GM12878 (cell line): ENCODE measurements at regions of chr1 and their contacts with region 1.

Region 1: GRCh38 chr1:107979926-107980325 is 14.9 kb upstream of the VAV3 start:
- DNase-seq: no peak
- ATAC-seq: peak; percentile 40
- H3K4me3 ChIP-seq: no peak overlapping the region
- H3K27ac ChIP-seq: no peak overlapping the region
- H3K4me1 ChIP-seq: no peaks in the 10 kb centered on the region
- H3K27me3 ChIP-seq: no peaks in the 10 kb centered on the region; a peak in 1 of 4 replicates
- CTCF ChIP-seq: no peak
- EP300 ChIP-seq: no peak
- POLR2A ChIP-seq: no peak
- RAD21 ChIP-seq: no peak

Region 2: GRCh38 chr1:107914134-107914765 is 65.7 kb before region 1 on chr1:
- CTCF ChIA-PET with region 1: no interaction called
- POLR2A ChIA-PET with region 1: no interaction called
- RAD21 ChIA-PET with region 1: no interaction called
- SMC1A ChIA-PET with region 1: no interaction called
- in situ Hi-C with region 1: no loop called
- intact Hi-C with region 1: no loop called
- DNase-seq: no peak
- ATAC-seq: no peak
- H3K4me3 ChIP-seq: no peak overlapping the region
- H3K27ac ChIP-seq: no peak overlapping the region
- H3K4me1 ChIP-seq: no peaks in the 10 kb centered on the region
- H3K27me3 ChIP-seq: no peaks in the 10 kb centered on the region; a peak in 1 of 4 replicates
- CTCF ChIP-seq: no peak
- EP300 ChIP-seq: no peak
- POLR2A ChIP-seq: no peak
- RAD21 ChIP-seq: no peak

Region 3: GRCh38 chr1:108000620-108001111 is 20.7 kb after region 1 on chr1:
- CTCF ChIA-PET with region 1: interaction called, 4 read pairs
- POLR2A ChIA-PET with region 1: interaction called, 5 read pairs
- RAD21 ChIA-PET with region 1: no interaction called
- SMC1A ChIA-PET with region 1: no interaction called
- in situ Hi-C with region 1: no loop called
- intact Hi-C with region 1: loop called (anchors 2 kb)
- DNase-seq: no peak
- ATAC-seq: no peak
- H3K4me3 ChIP-seq: no peak overlapping the region
- H3K27ac ChIP-seq: no peak overlapping the region
- H3K4me1 ChIP-seq: no peaks in the 10 kb centered on the region
- H3K27me3 ChIP-seq: no peaks in the 10 kb centered on the region
- CTCF ChIP-seq: no peak
- EP300 ChIP-seq: no peak
- POLR2A ChIP-seq: no peak
- RAD21 ChIP-seq: no peak